Heart left ventricle (tissue), 16 donors: ENCODE measurements at regions of chr1 and their contacts with region 1.

Region 1: DNA sequence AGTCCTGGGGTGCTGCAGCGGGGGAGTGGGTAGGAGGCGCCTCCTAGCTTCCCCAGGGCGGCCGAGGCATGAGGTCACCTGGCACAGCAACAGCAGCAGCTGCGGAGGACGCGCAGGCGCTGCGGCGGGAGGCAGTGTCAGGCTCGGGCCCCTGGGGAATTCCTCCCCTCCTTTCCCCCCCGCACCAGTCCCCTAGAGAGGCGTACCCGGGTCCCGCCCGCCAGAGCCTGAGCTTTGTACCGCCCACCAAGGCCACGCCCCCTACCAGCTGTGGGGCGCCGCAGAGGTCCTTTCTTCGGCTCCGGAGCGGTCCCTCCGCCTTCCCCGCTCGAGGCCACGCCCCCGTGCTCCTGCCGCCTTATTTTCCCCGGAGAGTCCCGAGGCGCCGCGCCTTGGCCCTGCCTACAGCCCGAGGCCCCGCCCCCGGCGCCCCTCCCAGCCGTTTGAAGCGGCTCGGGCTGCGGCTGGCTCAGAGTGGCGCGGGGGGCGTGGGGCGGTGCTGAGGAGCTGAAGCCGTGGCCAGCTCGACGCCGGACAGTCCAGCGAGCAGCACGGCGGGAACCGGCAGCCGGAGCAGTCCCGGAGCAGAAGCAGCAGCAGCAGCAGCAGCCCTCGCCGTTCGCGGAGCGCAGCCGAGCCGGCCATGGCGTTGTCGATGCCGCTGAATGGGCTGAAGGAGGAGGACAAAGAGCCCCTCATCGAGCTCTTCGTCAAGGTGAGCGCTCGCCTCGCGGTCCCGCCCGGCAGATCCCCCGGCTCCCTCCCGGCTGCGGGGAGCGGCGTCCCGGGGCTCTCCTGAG is at the start of gene CLIC4:
- DNase-seq: peak; percentile 100
- ATAC-seq: peak; percentile 96 to 97 (median 96)
- H3K4me3 ChIP-seq: peak within 1 kb of the TSS; percentile 76 to 98 (median 89)
- H3K27ac ChIP-seq: peak within 1 kb of the TSS; percentile 89 to 99 (median 96)
- H3K4me1 ChIP-seq: peaks cover 0 to 57% (median 38%) of the 10 kb centered on the region in 12 donors
- H3K27me3 ChIP-seq: no peaks in the 10 kb centered on the region
- CTCF ChIP-seq: peak in 9 of 12 donors; percentile 11 to 67 (median 41)
- POLR2A ChIP-seq: peak; percentile 92 to 100
- total RNA-seq, gene CLIC4: 280 to 917 (median 387) TPM

Region 2: DNA sequence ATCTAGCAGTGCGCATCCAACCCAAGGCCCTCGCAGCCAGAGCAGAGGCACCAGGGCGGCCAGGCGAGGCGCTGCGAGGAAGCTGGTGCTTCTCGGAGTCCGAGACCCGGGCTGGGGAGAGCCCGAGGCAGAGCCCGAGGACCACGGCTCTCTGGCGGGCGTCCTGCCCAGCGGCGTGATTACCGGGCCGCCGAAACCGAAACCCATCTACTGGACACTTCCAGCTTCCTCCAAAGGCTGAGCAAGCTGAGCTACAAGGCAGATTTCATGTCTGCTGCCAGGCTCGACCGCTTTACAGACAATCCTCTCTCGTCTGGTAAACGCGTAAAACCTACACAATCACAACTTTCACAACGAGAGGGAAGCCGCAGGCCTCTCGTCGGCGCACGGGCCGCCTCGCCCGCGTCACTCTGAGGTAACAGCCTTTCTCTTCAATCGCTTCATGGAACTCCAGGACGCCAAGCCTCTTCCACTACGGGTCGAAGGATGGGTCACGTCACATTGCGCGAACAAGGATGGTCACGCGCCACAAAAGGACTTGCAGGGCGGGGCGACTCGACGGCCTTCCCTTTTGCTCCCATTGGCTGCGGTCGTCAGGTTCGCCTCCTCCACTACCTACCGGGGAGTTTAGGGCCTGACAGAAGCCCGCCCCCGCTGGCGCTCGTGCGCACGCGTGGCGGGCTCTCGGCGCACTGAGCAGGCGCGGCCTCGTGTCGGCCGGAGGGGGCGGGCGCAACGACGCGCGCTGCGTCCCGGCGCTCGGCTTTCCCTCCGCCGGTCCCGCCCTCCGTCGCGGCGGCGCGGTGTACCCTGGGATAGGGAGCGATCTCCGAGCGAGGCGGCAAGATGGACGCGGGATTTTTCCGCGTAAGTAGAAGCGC is 102.4 kb before region 1 on chr1 and contains the start of gene SRRM1:
- intact Hi-C with region 1: loop called in 2 of 10 experiments (anchors 1 to 2 kb)
- DNase-seq: peak; percentile 99 to 100 (median 100)
- ATAC-seq: peak; percentile 96 to 98 (median 97)
- H3K4me3 ChIP-seq: peak within 1 kb of the TSS; percentile 79 to 98 (median 93)
- H3K27ac ChIP-seq: peak within 1 kb of the TSS; percentile 95 to 100 (median 99)
- H3K4me1 ChIP-seq: peaks cover 0 to 37% (median 25%) of the 10 kb centered on the region in 12 donors
- H3K27me3 ChIP-seq: no peaks in the 10 kb centered on the region
- CTCF ChIP-seq: peak in 2 of 12 donors; percentile 10 to 34
- POLR2A ChIP-seq: peak; percentile 97 to 99
- total RNA-seq, gene SRRM1: 39.3 to 97.0 (median 62.2) TPM

Region 3: DNA sequence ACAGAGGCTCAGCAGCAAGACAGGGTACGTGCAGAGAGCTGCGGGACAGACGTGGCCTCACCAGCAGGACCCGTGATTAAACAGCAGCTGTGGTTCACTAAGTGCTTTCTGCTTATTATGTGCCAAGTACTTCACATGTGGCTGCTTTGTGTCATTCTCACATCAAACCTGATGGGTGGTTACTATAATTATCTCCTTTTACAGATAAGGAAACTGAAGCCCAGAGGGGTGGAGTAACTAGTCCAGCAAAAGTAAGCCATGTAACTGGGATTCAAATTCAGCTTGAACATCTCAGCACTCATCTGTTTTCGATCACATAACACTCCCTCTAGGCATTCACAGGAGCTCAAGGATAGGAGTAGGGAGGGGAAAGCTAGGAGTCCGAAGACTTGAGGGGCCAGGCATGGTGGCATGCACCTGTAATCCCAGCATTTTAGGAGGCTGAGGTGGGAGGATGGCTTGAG is 50.7 kb before region 1 on chr1:
- intact Hi-C with region 1: loop called (anchors 2 to 5 kb)
- DNase-seq: peak in 4 of 5 donors; percentile 73 to 88 (median 80)
- ATAC-seq: peak; percentile 91 to 94 (median 92)
- H3K4me3 ChIP-seq: no peak overlapping the region
- H3K27ac ChIP-seq: peak overlapping the region; percentile 35 to 89 (median 73)
- H3K4me1 ChIP-seq: peaks cover 14 to 56% (median 36%) of the 10 kb centered on the region in 12 donors
- H3K27me3 ChIP-seq: no peaks in the 10 kb centered on the region
- CTCF ChIP-seq: no peak
- POLR2A ChIP-seq: no peak

Region 4: GRCh38 chr1:24720152-24720551 is 25.0 kb before region 1 on chr1:
- intact Hi-C with region 1: loop called in 1 of 10 experiments (anchors 2 kb)
- DNase-seq: peak; percentile 91 to 97 (median 94)
- ATAC-seq: peak; percentile 84 to 97 (median 96)
- H3K4me3 ChIP-seq: no peak overlapping the region
- H3K27ac ChIP-seq: peak overlapping the region; percentile 48 to 90 (median 76)
- H3K4me1 ChIP-seq: peaks cover 0 to 60% (median 37%) of the 10 kb centered on the region in 12 donors
- H3K27me3 ChIP-seq: no peaks in the 10 kb centered on the region
- CTCF ChIP-seq: no peak
- POLR2A ChIP-seq: no peak

Region 5: GRCh38 chr1:24793447-24794131 is 48.5 kb after region 1 on chr1:
- intact Hi-C with region 1: loop called in 2 of 10 experiments (anchors 5 kb)
- DNase-seq: no peak
- ATAC-seq: peak; percentile 85 to 88 (median 88)
- H3K4me3 ChIP-seq: no peak overlapping the region
- H3K27ac ChIP-seq: peak overlapping the region; percentile 9 to 85 (median 75)
- H3K4me1 ChIP-seq: peaks cover 0 to 46% (median 31%) of the 10 kb centered on the region in 12 donors
- H3K27me3 ChIP-seq: no peaks in the 10 kb centered on the region
- CTCF ChIP-seq: no peak
- POLR2A ChIP-seq: no peak

Region 6: GRCh38 chr1:24822887-24823286 is 77.8 kb after region 1 on chr1:
- intact Hi-C with region 1: loop called in 6 of 10 experiments (anchors 2 to 10 kb)
- DNase-seq: no peak
- ATAC-seq: no peak
- H3K4me3 ChIP-seq: no peak overlapping the region
- H3K27ac ChIP-seq: peak overlapping the region in 3 of 12 donors; percentile 2 to 54 (median 18)
- H3K4me1 ChIP-seq: peaks cover 0 to 57% (median 31%) of the 10 kb centered on the region in 12 donors
- H3K27me3 ChIP-seq: no peaks in the 10 kb centered on the region
- CTCF ChIP-seq: no peak
- POLR2A ChIP-seq: no peak